ENCODE measurements at regions of chr1 and their contacts with region 1.

Region 1: DNA sequence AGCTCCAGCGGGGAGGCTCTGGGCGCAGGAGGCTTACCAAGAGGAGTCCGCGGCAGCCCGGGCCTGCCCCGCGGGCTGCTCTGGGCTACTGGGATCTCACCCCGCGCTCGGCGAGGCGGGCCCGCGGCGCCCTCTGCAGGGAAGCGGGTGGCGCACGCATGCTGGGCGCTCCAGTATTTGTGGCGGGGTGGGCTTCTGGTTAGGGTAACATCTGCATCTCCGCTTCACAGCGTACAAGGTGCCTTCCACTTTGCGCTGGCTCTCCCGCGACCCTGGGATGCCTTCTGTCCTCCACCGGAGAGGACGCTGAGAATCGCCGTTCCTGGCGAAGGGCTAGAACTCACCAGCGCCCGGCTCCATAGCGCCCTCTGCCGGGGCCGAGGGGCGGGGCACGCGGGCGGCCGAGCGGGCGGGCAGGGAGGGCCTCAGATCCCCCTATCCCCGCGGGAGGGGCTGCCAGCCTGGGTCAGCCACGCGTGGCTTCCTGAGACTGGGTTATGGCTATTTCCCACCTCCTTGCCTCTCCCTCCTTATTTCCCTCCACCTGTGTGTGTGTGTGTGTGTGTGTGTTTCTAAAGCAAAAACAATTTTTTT is 46.6 kb upstream of the CTBS start:
- DNase-seq: peak in 1 of 2 donors; percentile 82
- H3K4me3 ChIP-seq: peak overlapping the region; percentile 49 to 52
- H3K27ac ChIP-seq: peak overlapping the region; percentile 46
- H3K4me1 ChIP-seq: peaks cover 10% of the 10 kb centered on the region
- H3K27me3 ChIP-seq: no peaks in the 10 kb centered on the region
- CTCF ChIP-seq: peak; percentile 40 to 93 (median 68)
- POLR2A ChIP-seq: no peak

Region 2: DNA sequence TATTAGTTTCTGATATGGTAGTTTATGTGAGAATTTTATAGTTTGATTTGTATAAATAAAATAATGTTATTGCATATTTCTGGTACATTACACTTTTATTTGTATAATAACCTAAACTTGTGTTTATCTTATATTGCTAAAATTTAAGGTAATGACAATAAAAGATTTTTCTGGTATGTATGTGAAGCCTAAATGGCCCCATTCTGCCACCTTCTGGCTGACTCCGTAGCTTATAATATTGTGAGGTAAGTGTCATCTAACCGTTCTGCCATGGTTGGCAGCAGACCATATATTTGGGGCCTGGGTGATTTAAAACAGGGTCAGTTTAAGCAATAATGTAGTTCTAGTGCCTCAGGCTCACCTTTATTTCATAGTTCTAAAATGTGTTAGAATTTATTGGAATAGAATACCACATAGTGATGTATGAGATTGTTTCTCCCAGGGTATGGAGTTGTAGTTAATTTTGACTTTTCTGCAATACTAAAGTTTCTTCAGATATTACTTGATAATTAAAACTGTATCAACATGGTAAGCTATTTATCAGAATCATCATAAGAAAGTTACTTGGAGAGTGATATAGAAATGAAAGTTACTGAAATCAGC is 497.9 kb before region 1 on chr1:
- intact Hi-C with region 1: loop called (anchors 10 kb)
- DNase-seq: no peak
- H3K4me3 ChIP-seq: no peak overlapping the region
- H3K27ac ChIP-seq: no peak overlapping the region
- H3K4me1 ChIP-seq: no peaks in the 10 kb centered on the region
- H3K27me3 ChIP-seq: no peaks in the 10 kb centered on the region
- CTCF ChIP-seq: peak in 2 of 3 experiments; percentile 32 to 37
- POLR2A ChIP-seq: no peak

Region 3: GRCh38 chr1:84260864-84261518 is 359.8 kb before region 1 on chr1:
- intact Hi-C with region 1: no loop called
- DNase-seq: no peak
- H3K4me3 ChIP-seq: no peak overlapping the region
- H3K27ac ChIP-seq: no peak overlapping the region
- H3K4me1 ChIP-seq: no peaks in the 10 kb centered on the region
- H3K27me3 ChIP-seq: no peaks in the 10 kb centered on the region
- CTCF ChIP-seq: no peak
- POLR2A ChIP-seq: no peak

Region 4: GRCh38 chr1:84442256-84442655 is 178.6 kb before region 1 on chr1:
- intact Hi-C with region 1: loop called (anchors 10 kb)
- DNase-seq: no peak
- H3K4me3 ChIP-seq: no peak overlapping the region
- H3K27ac ChIP-seq: no peak overlapping the region
- H3K4me1 ChIP-seq: no peaks in the 10 kb centered on the region
- H3K27me3 ChIP-seq: no peaks in the 10 kb centered on the region
- CTCF ChIP-seq: peak; percentile 42 to 72 (median 44)
- POLR2A ChIP-seq: no peak